ENCODE measurements at regions of chr12 and their contacts with region 1.

Region 1: DNA sequence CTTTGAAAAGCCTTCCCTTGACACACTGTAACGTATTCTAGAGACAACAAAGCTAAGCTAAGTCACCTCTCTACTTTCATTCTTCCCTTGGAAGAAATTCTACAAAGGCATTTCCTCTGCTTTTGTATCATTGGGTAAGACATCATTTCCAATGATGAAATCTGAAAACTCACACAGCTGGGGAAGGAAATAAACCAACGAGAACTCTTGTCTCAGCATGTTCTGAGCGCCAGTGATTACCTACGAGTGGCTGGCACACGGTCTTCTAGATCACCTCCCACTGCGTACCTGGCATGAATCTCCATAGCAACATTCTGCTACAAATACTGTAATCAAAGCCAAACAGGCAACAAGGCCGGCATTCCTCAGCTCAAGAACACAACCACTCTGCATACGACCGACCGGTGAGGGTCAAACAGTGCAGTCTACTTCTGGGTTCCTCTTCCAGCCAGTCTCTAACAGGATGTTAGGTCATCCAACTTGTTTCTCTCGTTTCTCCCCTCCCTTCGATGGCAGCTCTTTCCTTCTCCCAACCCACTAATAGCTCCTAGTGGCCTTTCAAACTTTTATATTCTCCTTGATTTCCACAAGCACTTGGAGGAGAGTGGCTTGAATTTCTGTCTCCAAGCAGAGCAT is 7.6 kb downstream of the VPS37B start:
- DNase-seq: no peak
- ATAC-seq: peak; percentile 63
- H3K4me3 ChIP-seq: peak overlapping the region; percentile 51
- H3K27ac ChIP-seq: peak overlapping the region; percentile 71
- H3K4me1 ChIP-seq: peaks cover 36% of the 10 kb centered on the region
- H3K27me3 ChIP-seq: no peaks in the 10 kb centered on the region
- CTCF ChIP-seq: no peak
- EP300 ChIP-seq: no peak
- POLR2A ChIP-seq: peak; percentile 48
- RAD21 ChIP-seq: no peak

Region 2: DNA sequence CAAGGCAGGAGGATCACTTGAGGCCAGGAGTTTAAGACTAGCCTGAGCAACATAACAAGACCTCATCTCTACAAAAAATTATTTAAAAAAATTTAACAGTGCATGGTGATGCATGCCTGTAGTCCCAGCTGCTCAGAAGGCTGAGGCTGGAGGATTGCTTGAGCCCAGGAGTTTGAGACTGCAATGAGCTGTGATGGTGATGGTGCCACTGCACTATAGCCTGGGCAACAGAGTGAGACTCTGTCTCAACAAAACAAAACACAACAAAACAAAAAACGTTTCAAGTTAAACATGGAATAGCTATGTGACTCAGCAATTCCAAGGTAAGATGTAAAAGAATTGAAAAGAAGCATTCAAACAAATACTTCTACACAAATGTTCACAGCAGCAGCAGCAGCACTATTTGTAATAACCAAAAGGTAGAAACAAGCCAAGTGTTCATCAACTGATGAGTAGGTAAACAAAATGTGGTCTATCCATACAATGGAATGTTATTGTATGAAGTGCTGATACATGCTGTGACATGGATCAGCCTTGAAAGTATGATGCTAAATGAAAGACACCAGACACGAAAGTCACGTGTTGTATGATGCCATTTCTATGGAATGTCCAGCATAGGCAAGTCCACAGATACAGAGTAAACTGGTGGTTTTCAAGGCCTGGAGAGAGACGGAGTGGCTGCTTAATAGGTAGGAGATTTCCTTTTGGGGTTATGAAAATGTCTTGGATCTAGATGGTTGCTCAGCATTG is 938.5 kb before region 1 on chr12:
- CTCF ChIA-PET with region 1: no interaction called
- POLR2A ChIA-PET with region 1: no interaction called
- RAD21 ChIA-PET with region 1: no interaction called
- SMC1A ChIA-PET with region 1: no interaction called
- in situ Hi-C with region 1: no loop called
- intact Hi-C with region 1: no loop called
- DNase-seq: no peak
- ATAC-seq: no peak
- H3K4me3 ChIP-seq: no peak overlapping the region
- H3K27ac ChIP-seq: no peak overlapping the region
- H3K4me1 ChIP-seq: no peaks in the 10 kb centered on the region
- H3K27me3 ChIP-seq: no peaks in the 10 kb centered on the region
- CTCF ChIP-seq: no peak
- EP300 ChIP-seq: no peak
- POLR2A ChIP-seq: no peak
- RAD21 ChIP-seq: no peak

Region 3: GRCh38 chr12:122841544-122842321 is 46.6 kb before region 1 on chr12:
- CTCF ChIA-PET with region 1: no interaction called
- POLR2A ChIA-PET with region 1: no interaction called
- RAD21 ChIA-PET with region 1: no interaction called
- SMC1A ChIA-PET with region 1: no interaction called
- in situ Hi-C with region 1: no loop called
- intact Hi-C with region 1: no loop called
- DNase-seq: no peak
- ATAC-seq: no peak
- H3K4me3 ChIP-seq: no peak overlapping the region
- H3K27ac ChIP-seq: no peak overlapping the region
- H3K4me1 ChIP-seq: peaks cover 3% of the 10 kb centered on the region
- H3K27me3 ChIP-seq: no peaks in the 10 kb centered on the region
- CTCF ChIP-seq: no peak
- EP300 ChIP-seq: no peak
- POLR2A ChIP-seq: no peak
- RAD21 ChIP-seq: no peak

Region 4: GRCh38 chr12:122871851-122872780 is 16.2 kb before region 1 on chr12:
- CTCF ChIA-PET with region 1: interaction called, 107 read pairs
- POLR2A ChIA-PET with region 1: interaction called, 23 read pairs
- RAD21 ChIA-PET with region 1: interaction called, 18 read pairs
- SMC1A ChIA-PET with region 1: interaction called, 64 read pairs
- in situ Hi-C with region 1: no loop called
- intact Hi-C with region 1: loop called (anchors 2 kb)
- DNase-seq: peak; percentile 52
- ATAC-seq: peak; percentile 52
- H3K4me3 ChIP-seq: peak overlapping the region; percentile 57; the same call in 1 of the 2 replicates
- H3K27ac ChIP-seq: peak overlapping the region; percentile 64
- H3K4me1 ChIP-seq: peaks cover 45% of the 10 kb centered on the region
- H3K27me3 ChIP-seq: no peaks in the 10 kb centered on the region
- CTCF ChIP-seq: no peak
- EP300 ChIP-seq: no peak
- POLR2A ChIP-seq: 0 out of 2 replicates have a peak, but pooled peaks have one; percentile 17
- RAD21 ChIP-seq: no peak

Region 5: DNA sequence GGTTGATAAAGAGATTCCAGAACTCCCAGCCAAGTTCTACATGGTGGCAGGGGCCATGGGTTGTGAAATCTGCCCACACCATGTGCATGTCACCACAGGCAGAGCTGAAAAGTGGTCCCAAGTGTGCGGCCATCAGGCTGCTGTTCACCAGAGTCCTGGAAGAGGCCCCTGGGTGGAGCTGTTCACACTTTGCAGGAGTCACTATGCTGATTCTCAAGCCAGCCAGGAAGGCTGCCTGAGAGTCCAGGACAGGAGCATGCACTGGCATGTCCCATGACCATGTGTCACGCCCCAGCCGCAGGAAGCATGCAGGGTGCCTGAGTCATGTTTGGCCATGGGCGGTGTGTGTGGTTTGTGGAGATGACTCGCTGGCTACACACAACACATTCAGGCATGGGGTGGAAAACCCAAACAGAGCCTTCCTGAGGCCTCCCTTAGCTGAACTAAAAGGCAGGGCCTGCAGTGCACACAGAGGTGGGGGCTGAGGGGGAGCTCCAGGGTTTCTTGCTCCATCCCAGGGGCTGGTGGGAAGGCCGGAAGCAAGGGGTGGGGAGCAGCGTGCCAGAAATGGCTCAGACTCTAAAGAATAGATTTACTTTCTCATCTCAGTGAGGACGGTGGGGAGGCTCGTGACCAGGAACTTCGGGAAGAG is 58.5 kb after region 1 on chr12:
- CTCF ChIA-PET with region 1: interaction called, 4 read pairs
- POLR2A ChIA-PET with region 1: interaction called, 3 read pairs
- RAD21 ChIA-PET with region 1: interaction called, 7 read pairs
- SMC1A ChIA-PET with region 1: interaction called, 18 read pairs
- in situ Hi-C with region 1: no loop called
- intact Hi-C with region 1: loop called (anchors 2 kb)
- DNase-seq: peak; percentile 59
- ATAC-seq: peak; percentile 84
- H3K4me3 ChIP-seq: no peak overlapping the region
- H3K27ac ChIP-seq: peak overlapping the region; percentile 27; the same call in 1 of the 2 replicates
- H3K4me1 ChIP-seq: peaks cover 31% of the 10 kb centered on the region
- H3K27me3 ChIP-seq: no peaks in the 10 kb centered on the region
- CTCF ChIP-seq: peak; percentile 24 to 29 (median 29); a peak in 4 of 6 replicates
- EP300 ChIP-seq: peak; percentile 17 to 44; a peak in 2 of 4 replicates
- POLR2A ChIP-seq: no peak
- RAD21 ChIP-seq: no peak

Region 6: DNA sequence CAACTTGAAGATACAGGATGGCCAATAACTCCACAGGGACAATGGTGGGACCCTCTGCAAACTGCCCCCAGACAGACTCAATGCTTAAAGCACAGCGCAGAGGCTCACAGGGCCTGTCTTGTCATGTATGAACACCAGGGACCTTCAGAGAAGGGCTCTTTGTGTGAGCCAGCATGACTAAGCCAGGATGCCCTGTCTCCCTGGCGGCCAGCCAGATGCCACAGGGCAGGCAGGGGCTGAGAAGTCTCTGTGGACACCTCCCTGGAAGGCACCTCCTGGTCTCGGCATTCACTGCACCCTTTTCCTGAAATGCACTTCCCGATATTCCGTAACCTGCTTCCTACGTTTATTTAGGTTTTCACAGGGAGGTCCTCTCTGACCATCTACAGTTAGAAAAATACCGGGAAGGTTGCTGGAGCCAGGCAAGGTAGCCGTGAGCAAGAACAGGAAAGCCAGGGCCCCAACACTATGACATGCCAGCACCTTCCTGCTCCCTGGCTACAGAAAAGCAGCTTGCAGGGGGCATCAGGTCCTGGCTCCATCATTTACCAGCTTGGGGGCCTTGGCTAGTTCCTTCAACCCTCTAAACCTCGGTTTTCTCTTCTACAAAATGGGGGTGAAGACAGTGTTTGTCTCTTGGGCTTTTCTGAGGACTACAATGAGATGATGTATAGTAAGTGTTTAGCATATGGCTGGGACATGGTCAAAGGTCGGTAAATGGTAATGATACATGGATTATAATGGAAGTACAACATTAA is 197.6 kb after region 1 on chr12:
- CTCF ChIA-PET with region 1: no interaction called
- POLR2A ChIA-PET with region 1: no interaction called
- RAD21 ChIA-PET with region 1: no interaction called
- SMC1A ChIA-PET with region 1: no interaction called
- in situ Hi-C with region 1: no loop called
- intact Hi-C with region 1: no loop called
- DNase-seq: no peak
- ATAC-seq: no peak
- H3K4me3 ChIP-seq: no peak overlapping the region
- H3K27ac ChIP-seq: no peak overlapping the region
- H3K4me1 ChIP-seq: peaks cover 29% of the 10 kb centered on the region
- H3K27me3 ChIP-seq: no peaks in the 10 kb centered on the region
- CTCF ChIP-seq: no peak
- EP300 ChIP-seq: no peak
- POLR2A ChIP-seq: no peak
- RAD21 ChIP-seq: no peak

Region 7: DNA sequence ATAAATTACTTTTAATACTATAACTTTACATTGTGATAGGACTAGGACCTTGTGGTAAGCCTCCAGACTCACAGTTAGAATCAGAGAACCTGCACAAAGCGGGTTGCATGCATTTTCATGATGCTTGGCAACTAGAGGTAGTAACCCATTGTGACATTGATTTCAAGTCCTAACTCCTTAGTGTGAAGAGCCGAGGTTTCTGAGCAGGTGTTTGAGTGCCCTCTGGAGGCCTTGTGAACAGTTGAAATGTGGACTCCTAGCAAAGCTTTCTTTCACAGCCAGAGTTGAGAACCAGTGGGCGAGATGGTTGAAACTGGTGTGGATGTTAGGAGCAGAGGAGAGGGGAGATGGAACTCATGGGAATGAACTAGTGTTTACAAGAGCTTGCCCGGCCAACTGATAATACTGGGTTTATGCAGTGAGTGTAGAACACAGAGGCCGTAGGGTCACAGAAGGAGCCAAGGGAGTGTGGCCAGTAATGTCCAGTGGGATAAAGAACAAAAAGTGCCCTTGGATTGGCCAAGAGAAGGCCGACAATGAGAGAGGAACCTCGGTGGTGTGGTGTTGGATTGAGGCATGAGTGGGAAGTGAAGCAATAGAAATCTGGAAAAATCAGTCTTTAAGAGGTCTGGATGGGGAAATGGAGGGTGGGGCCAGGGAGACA is 1095.6 kb after region 1 on chr12:
- CTCF ChIA-PET with region 1: no interaction called
- POLR2A ChIA-PET with region 1: no interaction called
- RAD21 ChIA-PET with region 1: no interaction called
- SMC1A ChIA-PET with region 1: no interaction called
- in situ Hi-C with region 1: no loop called
- intact Hi-C with region 1: no loop called
- DNase-seq: no peak
- ATAC-seq: peak; percentile 98
- H3K4me3 ChIP-seq: no peak overlapping the region
- H3K27ac ChIP-seq: no peak overlapping the region
- H3K4me1 ChIP-seq: peaks cover 13% of the 10 kb centered on the region
- H3K27me3 ChIP-seq: no peaks in the 10 kb centered on the region
- CTCF ChIP-seq: peak; percentile 67 to 83 (median 72)
- EP300 ChIP-seq: no peak
- POLR2A ChIP-seq: no peak
- RAD21 ChIP-seq: peak; percentile 94